ENCODE measurements at regions of chr15 and their contacts with region 1.

Region 1: DNA sequence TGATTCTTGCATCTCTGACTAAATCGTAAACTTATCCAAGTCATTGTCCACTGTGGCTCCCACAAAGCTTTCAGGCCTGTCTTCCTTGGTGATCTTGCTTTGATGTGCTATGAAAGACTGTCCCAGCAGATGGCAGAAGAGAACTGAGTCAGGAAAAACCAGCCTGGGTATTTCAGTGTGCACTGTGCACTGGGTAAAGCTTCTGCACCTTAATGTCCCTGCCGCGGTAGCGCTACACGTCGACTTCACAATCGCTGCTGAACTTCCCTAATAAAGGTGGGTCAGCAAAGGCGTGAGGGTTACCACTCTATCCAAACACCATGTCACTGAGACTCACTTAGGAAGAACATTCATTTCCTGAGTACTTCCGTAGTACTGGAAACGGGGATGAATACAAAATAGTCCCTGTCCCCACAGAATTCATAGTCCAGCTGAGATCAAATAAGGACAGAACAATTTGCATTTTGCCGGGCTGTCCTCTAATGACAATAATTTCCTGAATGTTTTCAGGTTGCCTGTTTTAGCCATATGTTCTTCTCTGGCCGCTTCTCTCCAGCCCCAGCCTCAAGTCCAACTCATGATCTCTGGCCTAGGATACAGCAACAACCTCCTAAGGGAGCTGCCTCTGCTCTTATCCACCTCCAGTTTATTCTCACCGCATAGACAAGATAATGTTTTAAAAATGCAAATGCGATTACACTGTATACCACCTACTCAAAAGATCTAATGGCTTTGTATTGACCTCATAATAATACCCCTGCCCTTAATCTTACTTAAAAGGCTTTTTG is 83.6 kb upstream of the AKAP13 start:
- H3K4me3 ChIP-seq: no peak overlapping the region; the same call in 1 of the 2 replicates
- H3K27ac ChIP-seq: no peak overlapping the region
- H3K4me1 ChIP-seq: no peaks in the 10 kb centered on the region; the same call in 1 of the 2 replicates
- CTCF ChIP-seq: peak; percentile 73; the same call in 1 of the 2 replicates

Region 2: GRCh38 chr15:85312486-85312885 is 15.7 kb after region 1 on chr15:
- CTCF ChIA-PET with region 1: interaction called, 23 read pairs
- POLR2A ChIA-PET with region 1: no interaction called
- H3K4me3 ChIP-seq: no peak overlapping the region
- H3K27ac ChIP-seq: no peak overlapping the region
- H3K4me1 ChIP-seq: 0 out of 2 replicates have a peak, but pooled peaks cover 4% of the 10 kb centered on the region
- CTCF ChIP-seq: no peak

Region 3: GRCh38 chr15:85324202-85324601 is 27.4 kb after region 1 on chr15:
- CTCF ChIA-PET with region 1: interaction called, 23 read pairs
- POLR2A ChIA-PET with region 1: no interaction called
- H3K4me3 ChIP-seq: no peak overlapping the region
- H3K27ac ChIP-seq: no peak overlapping the region
- H3K4me1 ChIP-seq: no peaks in the 10 kb centered on the region
- CTCF ChIP-seq: no peak

Region 4: DNA sequence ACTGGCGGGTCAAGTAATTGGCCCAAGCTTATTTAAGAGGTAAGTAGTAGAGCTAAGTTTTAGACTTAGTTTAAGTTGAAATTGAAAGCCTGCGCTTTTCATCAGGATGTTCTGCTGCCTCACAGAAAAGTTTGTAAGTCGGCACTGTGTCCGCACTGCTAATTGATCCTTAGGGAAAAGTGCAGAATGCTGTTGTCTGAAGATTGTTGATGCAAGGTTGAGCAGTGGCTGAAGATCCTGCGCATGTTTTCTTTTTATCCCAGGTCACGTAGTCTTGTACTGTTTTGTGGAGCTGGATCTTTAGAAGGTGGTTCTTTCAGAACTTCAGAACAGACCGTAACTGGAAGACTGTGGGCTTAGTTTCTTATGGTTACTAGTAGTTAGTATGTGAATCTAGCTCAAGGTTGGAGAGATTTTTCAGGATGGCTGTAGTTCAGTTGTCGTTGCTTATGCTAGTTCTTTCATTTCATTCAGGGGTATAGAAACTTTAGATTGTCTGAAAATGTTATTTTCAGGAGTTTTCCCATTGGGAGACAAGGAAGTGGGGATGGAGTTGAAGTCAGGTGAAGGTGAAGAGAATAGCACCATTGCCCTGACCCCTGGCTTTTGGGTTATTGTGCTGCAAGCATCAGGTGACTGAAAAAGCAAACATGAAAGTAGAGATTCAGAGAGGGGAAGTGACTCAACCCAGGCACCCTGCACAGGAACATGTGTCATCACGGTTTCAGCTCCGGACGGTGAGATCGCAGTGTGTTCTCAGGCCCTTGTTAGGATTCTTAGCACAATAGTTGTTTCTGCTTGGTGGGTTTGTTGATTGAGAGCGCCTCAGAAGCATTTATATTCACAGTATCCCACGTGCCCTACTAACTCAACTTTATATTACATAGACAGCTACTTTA is 116.4 kb after region 1 on chr15:
- CTCF ChIA-PET with region 1: interaction called, 43 read pairs
- POLR2A ChIA-PET with region 1: interaction called, 4 read pairs
- H3K4me3 ChIP-seq: no peak overlapping the region
- H3K27ac ChIP-seq: no peak overlapping the region
- H3K4me1 ChIP-seq: peaks cover 30% of the 10 kb centered on the region
- CTCF ChIP-seq: no peak; the same call in 1 of the 2 replicates

Measured in HEK293 (cell line).